Right cardiac atrium (tissue), 5 donors: ENCODE measurements at regions of chr2 and their contacts with region 1.

Region 1: DNA sequence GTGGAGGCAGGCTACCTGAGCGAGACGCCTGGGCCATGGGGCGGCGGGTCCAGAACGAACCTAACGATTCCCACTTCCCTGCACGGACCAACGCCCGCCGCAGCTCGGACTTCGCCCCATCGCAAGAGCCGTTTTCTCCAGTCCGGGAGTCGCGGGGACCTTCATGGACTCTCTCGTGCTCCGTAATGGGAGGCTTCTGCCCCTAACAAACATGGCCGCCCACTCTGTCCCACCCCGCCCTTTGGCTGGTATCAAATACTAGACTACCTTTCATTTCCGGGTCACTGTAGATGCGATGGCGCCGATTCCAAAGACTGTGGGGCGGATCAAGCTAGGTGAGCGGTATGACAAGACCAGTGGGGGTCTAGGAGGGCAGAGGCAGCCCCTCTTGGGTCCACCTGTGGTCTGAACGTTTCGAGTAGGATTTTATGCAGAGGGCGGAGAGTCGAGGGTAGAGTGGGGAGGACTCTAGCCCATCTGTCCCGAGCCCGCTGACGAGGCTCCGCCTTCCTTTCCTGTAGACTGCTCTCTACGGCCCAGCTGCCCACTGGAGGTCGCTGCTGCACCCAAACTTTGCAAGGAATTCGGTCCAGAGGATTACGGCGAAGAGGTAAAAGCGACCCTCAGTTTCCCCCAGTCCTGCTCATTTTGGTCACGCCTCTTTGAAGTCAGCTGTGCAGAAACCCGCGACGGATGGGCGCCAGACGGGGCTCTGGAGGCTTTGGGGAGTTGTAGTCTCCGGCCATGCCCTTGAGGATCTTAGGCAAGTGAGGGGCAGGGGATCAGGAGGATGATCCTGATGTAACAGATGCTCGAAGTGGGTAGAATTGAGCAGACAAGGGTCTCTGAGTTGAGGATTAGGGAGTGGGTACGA is at the starts of genes CCDC142 and TTC31:
- DNase-seq: peak; percentile 96 to 99 (median 97)
- ATAC-seq: peak; percentile 98 to 99
- H3K4me3 ChIP-seq: peak within 1 kb of the TSS; percentile 61
- H3K27ac ChIP-seq: peak within 1 kb of the TSS; percentile 89
- H3K4me1 ChIP-seq: peaks cover 7% of the 10 kb centered on the region
- H3K27me3 ChIP-seq: no peaks in the 10 kb centered on the region
- total RNA-seq, gene CCDC142: 7.5 to 11.1 (median 9.4) TPM
- total RNA-seq, gene TTC31: 11.3 to 12.3 (median 11.8) TPM

Region 2: DNA sequence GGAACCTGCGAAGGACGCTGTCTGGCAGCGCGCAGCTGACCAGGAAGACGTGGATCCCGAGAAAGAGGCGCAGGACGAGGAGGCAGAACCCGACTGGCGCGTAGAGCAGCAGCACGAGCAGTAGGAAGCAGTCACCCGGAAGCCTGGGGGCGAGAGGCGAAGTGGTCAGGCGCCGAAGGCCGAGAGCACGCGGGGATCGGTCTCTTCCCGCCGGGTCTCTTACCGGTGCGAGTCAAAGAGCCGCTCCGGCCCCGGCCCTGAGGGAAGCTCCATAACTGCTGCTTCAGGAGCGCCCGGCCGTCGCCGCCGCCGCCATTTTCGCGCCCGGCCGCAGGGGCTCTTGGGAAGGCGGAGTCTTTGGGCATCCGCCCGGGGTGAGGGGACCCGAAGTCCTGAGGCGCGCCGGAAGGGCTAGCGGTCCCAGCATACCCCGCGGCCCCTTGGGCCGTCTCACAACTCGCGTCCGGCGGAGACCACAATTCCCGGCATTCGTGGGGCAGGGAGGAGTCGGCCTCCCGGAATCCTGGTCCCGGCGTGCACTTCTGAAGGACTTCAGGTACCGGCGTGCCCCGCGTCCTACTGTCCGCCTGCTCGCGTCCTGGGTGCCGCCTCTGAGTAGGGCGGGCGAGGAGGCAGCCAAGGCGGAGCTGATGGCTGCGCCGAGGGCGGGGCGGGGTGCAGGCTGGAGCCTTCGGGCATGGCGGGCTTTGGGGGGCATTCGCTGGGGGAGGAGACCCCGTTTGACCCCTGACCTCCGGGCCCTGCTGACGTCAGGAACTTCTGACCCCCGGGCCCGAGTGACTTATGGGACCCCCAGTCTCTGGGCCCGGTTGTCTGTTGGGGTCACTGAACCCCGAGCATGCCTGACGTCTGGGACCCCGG is 46.6 kb after region 1 on chr2 and contains the starts of genes AUP1 and HTRA2:
- intact Hi-C with region 1: loop called in 1 of 4 experiments (anchors 2 kb)
- DNase-seq: peak; percentile 99
- ATAC-seq: peak; percentile 97
- H3K4me3 ChIP-seq: peak within 1 kb of the TSS; percentile 92
- H3K27ac ChIP-seq: peak within 1 kb of the TSS; percentile 85
- H3K4me1 ChIP-seq: peaks cover 3% of the 10 kb centered on the region
- H3K27me3 ChIP-seq: no peaks in the 10 kb centered on the region
- total RNA-seq, gene AUP1: 52.3 to 69.6 (median 63.3) TPM
- total RNA-seq, gene HTRA2: 26.3 to 31.2 (median 28.9) TPM

Region 3: GRCh38 chr2:74587664-74588277 is 104.7 kb after region 1 on chr2:
- intact Hi-C with region 1: loop called in 3 of 4 experiments (anchors 2 to 5 kb)
- DNase-seq: peak; percentile 52 to 81 (median 63)
- ATAC-seq: peak; percentile 92 to 93
- H3K4me3 ChIP-seq: no peak overlapping the region
- H3K27ac ChIP-seq: no peak overlapping the region
- H3K4me1 ChIP-seq: no peaks in the 10 kb centered on the region
- H3K27me3 ChIP-seq: no peaks in the 10 kb centered on the region

Region 4: DNA sequence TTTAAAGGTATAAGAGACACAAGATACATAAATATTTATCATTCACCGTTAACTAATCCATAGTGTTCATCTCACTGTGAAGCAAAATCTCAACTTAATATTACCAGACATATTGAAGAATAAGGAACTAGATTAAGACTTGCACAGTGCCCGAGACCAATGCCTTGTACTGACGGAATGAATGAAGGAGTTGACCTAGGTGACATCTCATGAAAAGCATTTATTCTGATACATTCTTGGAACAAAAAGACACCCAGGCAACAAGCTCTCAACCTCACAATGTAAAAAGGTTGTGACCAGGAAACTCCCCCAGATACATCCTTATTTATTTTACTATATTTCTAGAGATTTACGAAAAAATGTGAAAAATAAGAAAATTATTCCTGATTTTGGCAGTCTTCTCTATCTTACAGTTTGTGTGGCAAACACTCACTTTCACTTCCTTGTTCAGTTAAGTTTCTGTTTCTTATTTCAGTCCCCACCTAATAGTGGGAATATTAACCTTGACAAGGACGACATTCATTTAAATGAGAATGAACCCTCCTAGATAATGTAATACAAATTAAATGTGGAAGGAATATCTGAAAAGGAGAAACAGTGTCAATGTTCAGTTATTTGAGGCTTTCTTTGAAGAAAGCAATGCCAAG is 136.7 kb after region 1 on chr2:
- intact Hi-C with region 1: no loop called
- DNase-seq: no peak
- ATAC-seq: no peak
- H3K4me3 ChIP-seq: no peak overlapping the region
- H3K27ac ChIP-seq: no peak overlapping the region
- H3K4me1 ChIP-seq: no peaks in the 10 kb centered on the region
- H3K27me3 ChIP-seq: no peaks in the 10 kb centered on the region